CD4-positive, alpha-beta T cell (primary cell): ENCODE measurements at regions of chr10 and their contacts with region 1.

Region 1: DNA sequence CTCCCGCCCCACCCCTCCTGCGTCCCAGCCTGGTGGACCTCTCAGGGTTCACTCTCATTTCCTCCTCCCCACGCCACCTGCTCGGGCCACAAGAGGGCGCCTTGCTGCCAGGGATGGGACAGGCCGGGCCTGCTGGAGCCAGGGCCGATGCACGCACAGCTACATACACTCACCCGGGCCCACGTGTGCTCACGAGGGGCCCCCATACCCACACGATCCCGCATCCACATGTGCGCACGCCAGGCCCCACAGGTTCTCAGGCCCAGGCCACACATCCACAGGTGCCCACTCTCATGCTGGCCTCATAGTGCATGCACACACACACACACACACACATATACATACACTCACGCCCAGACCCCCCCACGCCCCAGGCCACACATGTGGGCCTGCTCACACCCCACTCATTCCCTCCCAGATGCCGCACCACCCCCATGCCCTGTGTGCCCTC is 68.6 kb downstream of the LHPP start:
- DNase-seq: peak; percentile 78 to 90 (median 84)
- ATAC-seq: peak; percentile 98
- H3K4me3 ChIP-seq: no peak overlapping the region
- H3K4me3 Mint-ChIP-seq: no peak overlapping the region
- H3K27ac ChIP-seq: no peak overlapping the region
- H3K27ac Mint-ChIP-seq: no peak overlapping the region
- H3K4me1 ChIP-seq: peaks cover 18% of the 10 kb centered on the region
- H3K4me1 Mint-ChIP-seq: peaks cover 9% of the 10 kb centered on the region
- H3K27me3 ChIP-seq: no peaks in the 10 kb centered on the region
- H3K27me3 Mint-ChIP-seq: no peaks in the 10 kb centered on the region
- CTCF ChIP-seq: peak; percentile 66

Region 2: GRCh38 chr10:124517461-124517860 is 12.8 kb before region 1 on chr10:
- CTCF ChIA-PET with region 1: no interaction called
- POLR2A ChIA-PET with region 1: no interaction called
- intact Hi-C with region 1: no loop called
- DNase-seq: no peak
- ATAC-seq: no peak
- H3K4me3 ChIP-seq: no peak overlapping the region
- H3K4me3 Mint-ChIP-seq: no peak overlapping the region
- H3K27ac ChIP-seq: no peak overlapping the region
- H3K27ac Mint-ChIP-seq: no peak overlapping the region
- H3K4me1 ChIP-seq: no peaks in the 10 kb centered on the region
- H3K4me1 Mint-ChIP-seq: no peaks in the 10 kb centered on the region
- H3K27me3 ChIP-seq: no peaks in the 10 kb centered on the region
- H3K27me3 Mint-ChIP-seq: no peaks in the 10 kb centered on the region
- CTCF ChIP-seq: no peak

Region 3: DNA sequence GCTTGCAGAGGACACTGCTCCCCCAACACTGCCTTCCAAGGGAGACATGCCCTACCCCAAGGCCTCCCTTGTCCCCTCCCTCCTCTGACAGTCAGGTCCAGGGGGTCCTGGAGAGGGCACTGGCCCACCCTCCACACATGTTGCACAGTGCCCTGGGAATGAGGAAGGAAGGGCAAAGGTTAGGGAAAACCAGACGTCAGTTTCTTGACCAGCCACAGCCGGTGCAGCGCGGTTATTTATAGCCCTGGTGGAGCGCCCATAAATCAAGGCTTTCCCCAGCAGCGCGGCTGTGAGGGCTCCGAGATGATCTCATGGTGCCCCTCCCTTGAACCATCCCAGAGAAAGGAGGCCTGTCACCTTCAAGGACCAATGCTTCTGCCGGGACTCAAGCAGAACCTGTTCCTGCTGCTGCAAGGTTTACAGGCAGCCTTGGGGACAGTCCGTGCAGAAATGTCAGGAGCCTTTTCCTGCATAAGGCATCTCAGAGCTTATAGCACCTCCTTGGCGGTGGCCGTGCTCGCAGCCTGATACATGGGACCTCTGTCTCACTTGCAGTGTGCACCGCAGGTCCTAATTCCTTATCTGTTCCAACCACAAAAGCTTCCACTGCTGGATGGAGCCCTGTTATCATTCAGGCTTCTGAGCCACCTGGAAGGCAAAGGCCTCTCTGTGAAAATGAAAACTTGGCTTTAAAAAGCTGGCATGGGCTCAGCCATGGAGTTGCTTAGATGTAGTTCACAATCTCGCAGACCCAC is 58.7 kb after region 1 on chr10:
- CTCF ChIA-PET with region 1: no interaction called
- POLR2A ChIA-PET with region 1: no interaction called
- intact Hi-C with region 1: no loop called
- DNase-seq: no peak
- ATAC-seq: no peak
- H3K4me3 ChIP-seq: no peak overlapping the region
- H3K4me3 Mint-ChIP-seq: no peak overlapping the region
- H3K27ac ChIP-seq: no peak overlapping the region
- H3K27ac Mint-ChIP-seq: no peak overlapping the region
- H3K4me1 ChIP-seq: peaks cover 3% of the 10 kb centered on the region
- H3K4me1 Mint-ChIP-seq: no peaks in the 10 kb centered on the region
- H3K27me3 ChIP-seq: no peaks in the 10 kb centered on the region
- H3K27me3 Mint-ChIP-seq: no peaks in the 10 kb centered on the region
- CTCF ChIP-seq: no peak

Region 4: GRCh38 chr10:124827474-124827873 is 297.2 kb after region 1 on chr10:
- CTCF ChIA-PET with region 1: interaction called, 3 read pairs
- POLR2A ChIA-PET with region 1: no interaction called
- intact Hi-C with region 1: loop called (anchors 1 kb)
- DNase-seq: peak in 3 of 14 experiments; percentile 28 to 45 (median 44)
- ATAC-seq: no peak
- H3K4me3 ChIP-seq: no peak overlapping the region
- H3K4me3 Mint-ChIP-seq: no peak overlapping the region
- H3K27ac ChIP-seq: no peak overlapping the region
- H3K27ac Mint-ChIP-seq: no peak overlapping the region
- H3K4me1 ChIP-seq: no peaks in the 10 kb centered on the region
- H3K4me1 Mint-ChIP-seq: no peaks in the 10 kb centered on the region
- H3K27me3 ChIP-seq: no peaks in the 10 kb centered on the region
- H3K27me3 Mint-ChIP-seq: no peaks in the 10 kb centered on the region
- CTCF ChIP-seq: peak; percentile 63

Region 5: DNA sequence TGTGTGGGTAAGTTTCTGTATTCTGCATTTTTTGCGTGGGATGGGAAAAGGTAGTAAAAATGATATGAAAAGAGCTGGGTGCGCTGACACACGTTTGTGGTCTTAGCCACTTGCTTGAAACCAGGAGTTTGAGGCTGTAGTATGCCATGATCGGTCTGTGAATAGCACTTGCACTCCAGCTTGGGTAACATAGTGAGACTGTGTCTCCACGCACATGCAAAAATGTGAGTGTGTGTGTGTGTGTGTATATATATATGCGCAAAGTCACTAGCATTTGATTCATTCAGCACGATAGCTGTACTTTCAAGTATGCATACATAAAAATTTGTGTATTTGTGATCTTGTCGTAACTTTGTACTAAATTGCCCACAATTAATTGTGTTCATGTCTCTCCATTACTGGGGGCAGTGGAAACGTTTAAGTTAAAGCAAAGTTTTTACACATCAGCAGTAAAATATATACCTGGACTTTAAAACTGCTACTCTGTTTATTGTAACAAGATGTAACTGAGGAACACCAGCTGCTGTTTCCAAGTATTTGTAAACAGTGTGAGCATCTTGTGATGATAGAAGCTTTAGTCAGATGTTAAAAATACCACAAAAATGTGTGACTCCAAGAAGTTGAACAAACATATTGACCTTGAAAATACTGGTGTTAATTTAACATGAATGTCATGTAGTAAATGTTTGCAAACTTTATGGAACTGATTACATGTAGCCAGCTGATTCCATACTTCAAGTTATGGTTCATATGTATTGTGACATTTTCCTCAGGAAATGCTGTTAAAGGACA is 413.3 kb after region 1 on chr10:
- CTCF ChIA-PET with region 1: no interaction called
- POLR2A ChIA-PET with region 1: no interaction called
- intact Hi-C with region 1: no loop called
- DNase-seq: no peak
- ATAC-seq: no peak
- H3K4me3 ChIP-seq: no peak overlapping the region
- H3K4me3 Mint-ChIP-seq: peak overlapping the region; percentile 2
- H3K27ac ChIP-seq: no peak overlapping the region
- H3K27ac Mint-ChIP-seq: no peak overlapping the region
- H3K4me1 ChIP-seq: peaks cover 15% of the 10 kb centered on the region
- H3K4me1 Mint-ChIP-seq: peaks cover 75% of the 10 kb centered on the region
- H3K27me3 ChIP-seq: no peaks in the 10 kb centered on the region
- H3K27me3 Mint-ChIP-seq: no peaks in the 10 kb centered on the region
- CTCF ChIP-seq: no peak

Region 6: DNA sequence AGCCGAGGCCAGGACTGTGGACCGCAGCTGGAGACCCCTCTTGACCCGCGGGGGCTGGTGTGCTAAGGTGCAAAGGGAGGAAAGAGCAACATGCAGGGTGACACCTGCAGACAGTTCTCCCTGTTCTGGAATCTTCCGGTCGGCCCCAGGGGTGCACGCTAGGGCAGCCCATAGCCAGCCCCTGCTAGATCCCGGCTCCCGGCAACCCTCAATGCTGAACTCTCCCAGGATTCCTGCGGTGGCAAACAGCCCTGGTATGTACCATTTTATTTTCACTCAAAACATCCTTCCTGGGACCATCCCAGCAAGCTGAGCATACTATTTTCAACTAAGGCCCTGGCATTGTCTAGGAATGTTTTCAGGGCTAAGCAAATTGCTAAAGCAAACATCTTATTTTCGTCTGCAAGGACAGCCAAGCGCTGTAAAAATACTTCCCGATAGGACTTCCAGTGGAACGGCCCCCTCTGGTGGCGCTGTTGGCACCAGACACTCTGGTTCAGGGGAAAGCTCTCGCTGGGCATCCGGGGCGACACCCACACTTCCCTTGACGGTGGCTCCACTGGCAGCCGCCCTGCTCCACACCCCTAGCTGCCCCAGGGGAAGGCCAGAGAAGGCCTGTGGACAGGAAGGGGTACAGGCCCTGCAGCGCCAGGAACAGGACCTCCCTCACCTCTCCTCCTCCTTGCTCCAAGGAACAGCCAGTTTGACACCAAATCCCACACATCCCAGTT is 530.8 kb after region 1 on chr10:
- CTCF ChIA-PET with region 1: no interaction called
- POLR2A ChIA-PET with region 1: no interaction called
- intact Hi-C with region 1: loop called in 1 of 2 experiments (anchors 5 kb)
- DNase-seq: peak in 12 of 14 experiments; percentile 6 to 52 (median 19)
- ATAC-seq: no peak
- H3K4me3 ChIP-seq: no peak overlapping the region
- H3K4me3 Mint-ChIP-seq: no peak overlapping the region
- H3K27ac ChIP-seq: no peak overlapping the region
- H3K27ac Mint-ChIP-seq: no peak overlapping the region
- H3K4me1 ChIP-seq: peaks cover 12% of the 10 kb centered on the region
- H3K4me1 Mint-ChIP-seq: peaks cover 14% of the 10 kb centered on the region
- H3K27me3 ChIP-seq: peaks cover 0 to 2% of the 10 kb centered on the region in 2 experiments
- H3K27me3 Mint-ChIP-seq: peaks cover 6% of the 10 kb centered on the region
- CTCF ChIP-seq: peak; percentile 29

Region 7: DNA sequence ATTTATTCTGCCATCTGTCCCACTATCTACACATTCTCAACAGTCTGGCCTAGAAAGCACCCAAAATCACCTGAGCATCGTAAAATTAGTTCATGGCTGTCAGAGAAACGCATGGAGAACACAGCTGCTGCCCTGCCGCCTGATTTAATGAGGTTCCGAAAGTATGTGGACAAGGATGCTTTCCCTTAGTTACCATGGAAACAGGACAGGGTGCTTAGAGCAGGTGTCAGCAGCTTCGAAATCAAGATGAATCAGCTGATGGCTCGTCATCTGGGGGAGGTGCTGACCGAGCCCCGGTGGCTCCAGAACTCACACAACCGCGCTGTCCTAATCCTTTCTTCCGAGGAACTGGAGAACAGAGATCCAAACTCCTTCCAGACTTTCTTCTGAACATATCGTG is 1001.2 kb after region 1 on chr10:
- CTCF ChIA-PET with region 1: no interaction called
- POLR2A ChIA-PET with region 1: no interaction called
- intact Hi-C with region 1: no loop called
- DNase-seq: no peak
- ATAC-seq: no peak
- H3K4me3 ChIP-seq: no peak overlapping the region
- H3K4me3 Mint-ChIP-seq: no peak overlapping the region
- H3K27ac ChIP-seq: no peak overlapping the region
- H3K27ac Mint-ChIP-seq: no peak overlapping the region
- H3K4me1 ChIP-seq: no peaks in the 10 kb centered on the region
- H3K4me1 Mint-ChIP-seq: no peaks in the 10 kb centered on the region
- H3K27me3 ChIP-seq: peaks cover 0 to 3% of the 10 kb centered on the region in 2 experiments
- H3K27me3 Mint-ChIP-seq: peaks cover 9% of the 10 kb centered on the region
- CTCF ChIP-seq: no peak